Activated CD4-positive, alpha-beta memory T cell treated with anti-CD3 and anti-CD28 coated beads for 36 hours (primary cell): ENCODE measurements at regions of chr3 and their contacts with region 1.

Region 1: DNA sequence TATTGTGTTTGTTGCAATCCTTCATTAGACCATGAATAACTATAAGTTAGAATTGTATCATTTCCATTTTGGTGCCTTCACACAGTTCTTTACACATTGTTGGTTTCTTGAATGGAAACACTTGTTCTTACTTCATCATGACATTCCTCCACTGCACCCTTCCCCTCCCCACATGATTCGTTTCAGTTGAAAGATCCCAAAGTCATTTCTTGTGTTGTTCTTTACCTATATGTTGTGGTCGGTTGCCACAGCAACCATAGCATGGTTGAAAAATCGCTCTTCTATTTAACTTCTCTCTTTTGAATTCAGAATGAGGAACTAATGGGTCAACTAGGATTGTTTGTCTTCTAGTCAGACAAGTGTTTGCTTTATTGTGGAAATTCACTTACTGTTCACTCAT is 103.3 kb downstream of the IL1RAP start:
- DNase-seq: peak; percentile 66
- H3K4me3 Mint-ChIP-seq: no peak overlapping the region
- H3K27ac Mint-ChIP-seq: peak overlapping the region; percentile 96
- H3K4me1 Mint-ChIP-seq: peaks cover 56% of the 10 kb centered on the region
- H3K27me3 Mint-ChIP-seq: no peaks in the 10 kb centered on the region

Region 2: DNA sequence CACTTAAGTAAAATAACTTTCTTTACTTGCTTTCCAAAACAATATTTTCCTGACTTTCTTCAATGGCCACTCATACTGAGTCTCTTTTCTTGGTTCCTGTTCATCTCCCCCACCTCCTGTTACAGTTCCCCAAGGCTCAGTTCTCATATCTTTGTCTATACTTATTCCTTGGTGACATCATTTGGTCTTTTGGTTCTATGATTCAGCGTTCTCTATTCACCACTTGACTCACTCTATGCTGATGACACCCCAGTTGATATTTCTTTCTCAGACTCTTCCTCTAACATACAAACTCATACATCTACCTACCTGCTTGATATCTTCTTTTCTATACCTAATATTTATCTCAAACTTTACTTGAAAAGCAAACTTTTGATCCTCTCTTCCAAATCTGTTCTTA is 411.4 kb before region 1 on chr3:
- CTCF ChIA-PET with region 1: no interaction called
- POLR2A ChIA-PET with region 1: no interaction called
- intact Hi-C with region 1: loop called (anchors 5 kb)
- DNase-seq: no peak
- H3K4me3 Mint-ChIP-seq: no peak overlapping the region
- H3K27ac Mint-ChIP-seq: no peak overlapping the region
- H3K4me1 Mint-ChIP-seq: peaks cover 13% of the 10 kb centered on the region
- H3K27me3 Mint-ChIP-seq: peaks cover 23% of the 10 kb centered on the region

Region 3: GRCh38 chr3:190384241-190384863 is 232.8 kb before region 1 on chr3:
- CTCF ChIA-PET with region 1: no interaction called
- POLR2A ChIA-PET with region 1: no interaction called
- intact Hi-C with region 1: loop called (anchors 1 kb)
- DNase-seq: peak; percentile 27
- H3K4me3 Mint-ChIP-seq: no peak overlapping the region
- H3K27ac Mint-ChIP-seq: no peak overlapping the region
- H3K4me1 Mint-ChIP-seq: peaks cover 4% of the 10 kb centered on the region
- H3K27me3 Mint-ChIP-seq: peaks cover 9% of the 10 kb centered on the region

Region 4: GRCh38 chr3:190491533-190492054 is 125.6 kb before region 1 on chr3:
- CTCF ChIA-PET with region 1: interaction called, 3 read pairs
- POLR2A ChIA-PET with region 1: interaction called, 11 read pairs
- intact Hi-C with region 1: loop called (anchors 1 kb)
- DNase-seq: peak; percentile 37
- H3K4me3 Mint-ChIP-seq: no peak overlapping the region
- H3K27ac Mint-ChIP-seq: no peak overlapping the region
- H3K4me1 Mint-ChIP-seq: peaks cover 17% of the 10 kb centered on the region
- H3K27me3 Mint-ChIP-seq: peaks cover 57% of the 10 kb centered on the region

Region 5: GRCh38 chr3:190513409-190514162 is 103.6 kb before region 1 on chr3 and contains the start of gene IL1RAP:
- CTCF ChIA-PET with region 1: interaction called, 15 read pairs
- POLR2A ChIA-PET with region 1: interaction called, 17 read pairs
- intact Hi-C with region 1: loop called (anchors 1 kb)
- DNase-seq: peak; percentile 90
- H3K4me3 Mint-ChIP-seq: peak within 1 kb of the TSS; percentile 86
- H3K27ac Mint-ChIP-seq: peak within 1 kb of the TSS; percentile 64
- H3K4me1 Mint-ChIP-seq: peaks cover 33% of the 10 kb centered on the region
- H3K27me3 Mint-ChIP-seq: no peaks in the 10 kb centered on the region
- total RNA-seq, gene IL1RAP: 14.8 to 15.8 TPM

Region 6: GRCh38 chr3:190566043-190566933 is 50.9 kb before region 1 on chr3:
- CTCF ChIA-PET with region 1: interaction called, 4 read pairs
- POLR2A ChIA-PET with region 1: interaction called, 5 read pairs
- intact Hi-C with region 1: loop called (anchors 1 kb)
- DNase-seq: peak; percentile 90
- H3K4me3 Mint-ChIP-seq: no peak overlapping the region
- H3K27ac Mint-ChIP-seq: peak overlapping the region; percentile 84
- H3K4me1 Mint-ChIP-seq: peaks cover 45% of the 10 kb centered on the region
- H3K27me3 Mint-ChIP-seq: no peaks in the 10 kb centered on the region

Region 7: DNA sequence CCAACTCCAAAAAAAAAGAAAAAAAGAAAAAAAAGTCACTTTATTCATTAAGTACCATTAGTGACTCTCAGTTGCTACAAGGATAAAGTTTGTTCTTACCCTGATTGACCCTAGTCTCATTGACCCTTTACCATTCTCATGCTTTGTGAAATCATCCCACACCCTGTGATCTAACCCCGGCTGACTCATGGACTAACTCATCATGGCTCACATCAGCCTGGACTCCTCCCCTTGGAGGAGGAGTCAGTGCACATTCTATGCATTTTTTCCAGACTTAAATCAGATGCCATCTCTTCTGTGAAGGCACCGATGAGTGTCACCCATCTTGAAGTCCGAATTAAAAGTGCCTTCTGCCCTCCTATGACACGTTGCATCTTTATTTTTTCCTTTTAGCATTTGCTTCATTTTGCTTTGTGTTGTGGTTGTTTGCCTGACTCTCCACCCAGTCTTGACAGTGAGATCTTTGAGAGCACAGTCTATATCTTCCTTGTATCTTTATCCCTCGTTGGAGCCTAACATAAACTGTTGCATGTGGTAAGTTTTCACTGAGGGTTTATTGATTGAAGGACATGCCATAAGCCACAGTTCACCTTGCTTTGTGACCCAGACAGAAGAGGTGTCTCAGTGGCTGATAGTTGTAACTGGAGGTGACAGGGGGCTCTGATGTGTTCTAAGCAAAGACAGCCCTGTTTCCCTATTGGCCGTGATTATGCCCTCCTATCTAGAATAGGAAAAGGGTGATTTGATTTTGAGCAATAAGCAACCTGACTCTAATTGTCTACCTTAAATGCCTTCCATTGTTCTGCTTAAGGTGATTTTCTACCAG is 31.2 kb before region 1 on chr3:
- CTCF ChIA-PET with region 1: interaction called, 13 read pairs
- POLR2A ChIA-PET with region 1: interaction called, 10 read pairs
- intact Hi-C with region 1: loop called (anchors 1 kb)
- DNase-seq: peak; percentile 83
- H3K4me3 Mint-ChIP-seq: peak overlapping the region; percentile 64
- H3K27ac Mint-ChIP-seq: peak overlapping the region; percentile 95
- H3K4me1 Mint-ChIP-seq: peaks cover 27% of the 10 kb centered on the region
- H3K27me3 Mint-ChIP-seq: no peaks in the 10 kb centered on the region